Body of pancreas (tissue), 4 donors: ENCODE measurements at regions of chr6 and their contacts with region 1.

Region 1: GRCh38 chr6:41602864-41603608 is 35.2 kb upstream of the MDFI start:
- DNase-seq: peak; percentile 81 to 86 (median 83)
- ATAC-seq: peak; percentile 83
- H3K4me3 ChIP-seq: no peak overlapping the region
- H3K27ac ChIP-seq: peak overlapping the region in 1 of 4 donors; percentile 60
- H3K4me1 ChIP-seq: peaks cover 9% of the 10 kb centered on the region
- H3K27me3 ChIP-seq: no peaks in the 10 kb centered on the region
- CTCF ChIP-seq: peak; percentile 80 to 93 (median 87)
- POLR2A ChIP-seq: peak in 1 of 3 donors; percentile 15

Region 2: GRCh38 chr6:41371461-41371991 is 231.5 kb before region 1 on chr6:
- intact Hi-C with region 1: loop called (anchors 5 kb)
- DNase-seq: peak in 3 of 4 donors; percentile 22 to 46 (median 43)
- ATAC-seq: no peak
- H3K4me3 ChIP-seq: no peak overlapping the region
- H3K27ac ChIP-seq: no peak overlapping the region
- H3K4me1 ChIP-seq: peaks cover 46% of the 10 kb centered on the region
- H3K27me3 ChIP-seq: peaks cover 0 to 30% of the 10 kb centered on the region in 2 donors
- CTCF ChIP-seq: peak in 2 of 7 experiments; percentile 18 to 20
- POLR2A ChIP-seq: no peak

Region 3: DNA sequence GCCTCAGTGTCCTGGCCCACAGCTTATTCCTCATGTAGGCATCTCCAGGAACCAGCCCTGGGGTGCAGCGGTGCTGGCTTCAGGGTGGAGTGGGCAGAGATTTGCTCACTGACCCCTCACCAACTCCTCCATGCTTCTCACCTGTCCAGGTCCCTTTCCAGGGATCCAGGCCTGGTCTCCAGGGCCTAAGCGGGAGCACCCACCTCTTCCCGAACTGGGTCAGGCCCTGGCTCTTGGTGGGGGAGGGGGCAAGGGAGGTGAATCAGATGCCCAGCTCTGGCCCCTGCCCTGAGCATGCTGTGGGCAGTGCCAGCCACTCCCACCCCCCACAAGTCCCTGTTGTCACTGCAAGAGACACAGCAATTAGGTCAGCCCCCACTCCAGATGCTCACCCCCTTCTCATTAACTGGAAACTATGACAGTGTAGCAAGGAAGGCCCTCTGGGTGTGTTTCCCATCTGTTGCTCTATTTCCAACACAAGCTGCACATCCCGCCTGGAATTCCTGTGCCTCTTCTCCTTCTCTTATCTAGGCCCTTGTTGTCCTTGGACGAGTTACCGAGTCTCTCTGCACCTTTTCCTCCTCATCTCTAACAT is 72.2 kb after region 1 on chr6:
- intact Hi-C with region 1: loop called (anchors 5 kb)
- DNase-seq: no peak
- ATAC-seq: no peak
- H3K4me3 ChIP-seq: no peak overlapping the region
- H3K27ac ChIP-seq: no peak overlapping the region
- H3K4me1 ChIP-seq: no peaks in the 10 kb centered on the region
- H3K27me3 ChIP-seq: no peaks in the 10 kb centered on the region
- CTCF ChIP-seq: no peak
- POLR2A ChIP-seq: no peak

Region 4: GRCh38 chr6:41787219-41787917 is 184.3 kb after region 1 on chr6 and contains the start of gene TOMM6:
- intact Hi-C with region 1: no loop called
- DNase-seq: peak; percentile 95 to 96 (median 96)
- ATAC-seq: peak; percentile 89
- H3K4me3 ChIP-seq: peak within 1 kb of the TSS; percentile 46 to 66
- H3K27ac ChIP-seq: peak within 1 kb of the TSS; percentile 75 to 93 (median 92)
- H3K4me1 ChIP-seq: peaks cover 48% of the 10 kb centered on the region
- H3K27me3 ChIP-seq: no peaks in the 10 kb centered on the region
- CTCF ChIP-seq: peak; percentile 80 to 99 (median 98)
- POLR2A ChIP-seq: peak; percentile 72 to 94 (median 86)
- total RNA-seq, gene TOMM6: 83.5 to 127 TPM

Region 5: DNA sequence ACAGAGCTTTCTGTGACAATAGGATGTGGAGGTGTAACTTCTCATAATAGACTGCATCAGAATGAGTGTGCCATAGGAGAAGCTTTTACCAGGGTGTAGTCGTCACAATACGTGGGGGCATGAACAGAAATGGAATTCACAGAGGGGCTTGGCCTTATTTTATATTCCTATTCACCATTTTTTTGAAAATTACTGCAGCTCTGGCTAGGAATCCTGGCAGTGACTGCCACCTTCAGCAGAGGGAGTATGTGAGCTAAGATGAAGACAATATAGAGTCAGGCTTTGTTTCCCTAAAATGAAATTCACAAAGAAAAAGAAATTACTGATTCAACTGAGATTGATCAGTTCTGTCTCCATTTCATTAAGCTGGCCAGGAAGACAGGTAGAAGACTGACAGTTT is 198.3 kb after region 1 on chr6:
- intact Hi-C with region 1: no loop called
- DNase-seq: no peak
- ATAC-seq: no peak
- H3K4me3 ChIP-seq: no peak overlapping the region
- H3K27ac ChIP-seq: no peak overlapping the region
- H3K4me1 ChIP-seq: no peaks in the 10 kb centered on the region
- H3K27me3 ChIP-seq: no peaks in the 10 kb centered on the region
- CTCF ChIP-seq: peak in 1 of 7 experiments; percentile 12
- POLR2A ChIP-seq: no peak